HepG2 (cell line): ENCODE measurements at regions of chr16 and their contacts with region 1.

Region 1: DNA sequence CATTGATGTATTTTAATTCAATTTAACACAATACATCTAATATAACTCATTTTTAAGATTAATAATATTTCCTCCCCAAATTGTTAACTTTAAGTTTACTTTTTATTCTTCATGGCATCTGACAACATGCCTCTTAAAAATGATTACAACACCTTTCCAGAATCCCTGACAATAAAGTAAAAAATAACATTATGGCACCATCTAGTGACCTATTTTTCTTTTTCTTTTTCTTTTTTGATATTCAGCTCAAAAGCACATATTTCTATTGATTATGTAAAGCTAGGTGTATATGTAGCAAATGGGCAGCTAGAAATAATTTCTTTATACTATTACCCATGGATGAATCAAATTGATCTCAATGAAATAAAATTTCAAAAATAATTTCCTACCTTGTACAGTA is 834.3 kb upstream of the CDH8 start:
- DNase-seq: no peak
- ATAC-seq: no peak
- H3K4me3 ChIP-seq: no peak overlapping the region
- H3K27ac ChIP-seq: no peak overlapping the region
- H3K4me1 ChIP-seq: no peaks in the 10 kb centered on the region
- H3K27me3 ChIP-seq: no peaks in the 10 kb centered on the region
- CTCF ChIP-seq: no peak
- EP300 ChIP-seq: no peak
- POLR2A ChIP-seq: no peak
- RAD21 ChIP-seq: no peak

Region 2: DNA sequence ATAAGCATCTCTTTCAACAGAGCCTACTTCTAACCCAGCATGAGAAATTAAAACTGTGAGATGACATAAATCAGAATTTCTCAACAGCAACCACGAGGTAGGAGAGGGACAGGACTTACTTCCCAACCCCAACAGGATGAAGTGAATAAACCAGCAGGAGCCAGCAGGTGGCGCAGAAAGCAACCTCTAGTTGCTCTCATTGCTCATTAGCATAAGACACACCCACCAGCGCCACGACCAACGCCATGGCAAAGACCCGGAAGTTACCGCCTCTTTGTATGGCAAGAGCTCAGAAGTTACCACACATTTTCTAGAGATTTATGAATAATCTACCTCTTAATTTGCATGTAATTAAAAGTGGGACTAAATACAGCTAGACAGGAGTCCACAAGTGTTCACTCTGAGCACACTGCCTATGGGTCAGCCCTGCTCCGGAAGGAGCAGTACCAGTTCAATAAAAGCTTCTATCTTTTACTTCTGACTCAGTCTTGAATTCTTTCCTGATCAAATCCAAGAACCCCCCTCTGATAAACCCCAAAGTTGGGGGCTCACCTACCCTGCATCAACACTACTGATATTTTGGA is 644.8 kb before region 1 on chr16:
- CTCF ChIA-PET with region 1: no interaction called
- POLR2A ChIA-PET with region 1: no interaction called
- in situ Hi-C with region 1: no loop called
- intact Hi-C with region 1: loop called (anchors 2 kb)
- DNase-seq: peak; percentile 76
- ATAC-seq: peak; percentile 97
- H3K4me3 ChIP-seq: no peak overlapping the region
- H3K27ac ChIP-seq: no peak overlapping the region
- H3K4me1 ChIP-seq: no peaks in the 10 kb centered on the region
- H3K27me3 ChIP-seq: no peaks in the 10 kb centered on the region
- CTCF ChIP-seq: peak; percentile 57
- EP300 ChIP-seq: no peak
- POLR2A ChIP-seq: no peak
- RAD21 ChIP-seq: no peak